Calu3 (cell line): ENCODE measurements at regions of chr2 and their contacts with region 1.

Region 1: GRCh38 chr2:160224060-160224459 is 24.0 kb upstream of the ITGB6 start:
- DNase-seq: peak; percentile 59
- H3K4me3 Mint-ChIP-seq: peak overlapping the region; percentile 17
- H3K27ac Mint-ChIP-seq: peak overlapping the region; percentile 94
- H3K4me1 Mint-ChIP-seq: peaks cover 99% of the 10 kb centered on the region
- H3K27me3 Mint-ChIP-seq: no peaks in the 10 kb centered on the region
- CTCF ChIP-seq: no peak

Region 2: DNA sequence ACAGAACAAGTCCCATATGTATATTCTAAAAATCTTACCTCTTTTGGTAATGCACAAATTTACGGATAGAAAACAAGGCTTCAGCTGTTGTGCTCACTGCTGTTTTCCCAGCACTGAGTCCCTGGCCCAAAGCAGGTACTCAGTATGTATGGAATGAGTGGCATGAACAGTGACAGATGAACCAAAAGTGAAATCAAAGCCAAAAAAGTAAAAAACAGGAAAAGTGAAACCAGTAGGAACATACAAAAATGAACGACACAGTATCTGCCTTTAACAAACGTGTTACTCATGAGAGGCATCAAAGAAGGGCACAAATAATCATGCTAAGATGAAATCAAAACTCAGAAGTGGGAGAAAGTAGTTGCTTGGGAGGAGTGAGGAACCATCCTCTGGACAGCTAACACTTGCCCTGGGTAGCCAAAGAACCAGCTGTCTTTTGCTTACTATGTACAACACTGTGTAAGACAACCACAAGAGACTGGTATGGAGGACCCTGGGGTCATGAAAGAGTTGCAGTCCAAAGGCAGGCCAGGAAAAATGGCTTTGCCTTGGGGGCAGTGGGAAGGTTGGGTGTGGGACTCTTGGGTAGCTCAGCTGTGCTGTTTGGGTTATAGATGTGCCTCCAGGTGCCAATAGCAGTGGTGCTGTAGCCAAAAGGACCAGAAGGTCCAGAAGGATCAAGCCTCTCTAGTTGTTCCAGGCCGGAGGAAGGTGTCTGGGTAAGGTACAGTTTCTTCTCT is 121.9 kb before region 1 on chr2:
- CTCF ChIA-PET with region 1: no interaction called
- intact Hi-C with region 1: no loop called
- DNase-seq: no peak
- H3K4me3 Mint-ChIP-seq: no peak overlapping the region
- H3K27ac Mint-ChIP-seq: no peak overlapping the region
- H3K4me1 Mint-ChIP-seq: peaks cover 7% of the 10 kb centered on the region
- H3K27me3 Mint-ChIP-seq: no peaks in the 10 kb centered on the region
- CTCF ChIP-seq: no peak

Region 3: DNA sequence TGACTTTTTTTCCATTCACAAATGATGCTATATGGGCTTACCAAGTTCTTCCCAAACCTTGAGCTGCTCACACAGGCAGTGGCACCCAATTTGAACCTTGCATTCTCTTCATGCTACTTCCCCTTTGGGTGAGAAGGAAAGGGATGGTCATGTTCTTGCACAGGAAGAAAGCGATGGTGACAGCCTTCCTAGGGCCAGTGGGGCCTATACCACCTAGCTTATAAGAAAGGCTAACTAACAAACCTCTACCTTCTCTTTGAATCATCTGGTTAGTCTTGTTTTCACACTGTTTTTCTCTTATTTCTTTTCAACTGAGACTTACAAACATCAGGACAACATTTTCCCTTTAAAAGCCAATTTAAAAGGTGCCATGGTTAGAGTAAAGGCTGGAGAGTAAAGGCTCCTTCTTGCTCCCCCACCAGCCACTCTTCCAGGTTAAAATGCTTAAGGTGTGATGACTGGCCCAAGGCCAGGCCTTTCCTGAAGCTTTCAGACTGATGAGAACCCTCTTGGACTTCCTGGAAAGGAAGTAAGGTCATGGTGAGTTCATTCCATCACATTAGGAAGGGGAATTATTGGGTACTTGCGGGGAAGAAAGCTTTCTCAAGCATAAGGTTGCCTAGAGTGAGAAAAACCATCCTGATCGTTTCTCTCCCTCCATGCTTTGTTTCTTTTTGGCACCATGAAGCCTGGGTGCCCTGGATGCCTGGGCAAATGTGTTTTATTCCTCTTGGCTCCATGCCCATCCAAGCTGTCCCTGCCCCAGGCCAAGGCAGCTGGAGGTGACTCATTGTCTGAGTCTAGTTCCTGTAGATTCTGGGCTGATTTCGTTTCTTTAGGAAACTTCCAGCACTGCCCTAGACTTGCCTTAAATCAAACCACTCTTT is 17.4 kb after region 1 on chr2:
- CTCF ChIA-PET with region 1: interaction called, 11 read pairs
- intact Hi-C with region 1: loop called (anchors 2 kb)
- DNase-seq: peak; percentile 85
- H3K4me3 Mint-ChIP-seq: peak overlapping the region; percentile 6
- H3K27ac Mint-ChIP-seq: peak overlapping the region; percentile 93
- H3K4me1 Mint-ChIP-seq: peaks cover 75% of the 10 kb centered on the region
- H3K27me3 Mint-ChIP-seq: no peaks in the 10 kb centered on the region
- CTCF ChIP-seq: no peak

Region 4: GRCh38 chr2:160252278-160252887 is 28.3 kb after region 1 on chr2:
- CTCF ChIA-PET with region 1: interaction called, 14 read pairs
- intact Hi-C with region 1: no loop called
- DNase-seq: no peak
- H3K4me3 Mint-ChIP-seq: peak overlapping the region; percentile 65
- H3K27ac Mint-ChIP-seq: peak overlapping the region; percentile 80
- H3K4me1 Mint-ChIP-seq: peaks cover 68% of the 10 kb centered on the region
- H3K27me3 Mint-ChIP-seq: no peaks in the 10 kb centered on the region
- CTCF ChIP-seq: peak; percentile 68

Region 5: GRCh38 chr2:160269803-160270570 is 45.9 kb after region 1 on chr2:
- CTCF ChIA-PET with region 1: interaction called, 9 read pairs
- intact Hi-C with region 1: loop called (anchors 1 kb)
- DNase-seq: peak; percentile 88
- H3K4me3 Mint-ChIP-seq: peak overlapping the region; percentile 76
- H3K27ac Mint-ChIP-seq: peak overlapping the region; percentile 99
- H3K4me1 Mint-ChIP-seq: peaks cover 72% of the 10 kb centered on the region
- H3K27me3 Mint-ChIP-seq: no peaks in the 10 kb centered on the region
- CTCF ChIP-seq: peak; percentile 62

Region 6: GRCh38 chr2:160394153-160394552 is 170.1 kb after region 1 on chr2:
- CTCF ChIA-PET with region 1: no interaction called
- intact Hi-C with region 1: loop called (anchors 10 kb)
- DNase-seq: no peak
- H3K4me3 Mint-ChIP-seq: no peak overlapping the region
- H3K27ac Mint-ChIP-seq: peak overlapping the region; percentile 58
- H3K4me1 Mint-ChIP-seq: peaks cover 28% of the 10 kb centered on the region
- H3K27me3 Mint-ChIP-seq: no peaks in the 10 kb centered on the region
- CTCF ChIP-seq: no peak